IMR-90 (cell line): ENCODE measurements at regions of chr13 and their contacts with region 1.

Region 1: GRCh38 chr13:59906413-59907049 is 257.2 kb downstream of the DIAPH3 start:
- DNase-seq: peak; percentile 58
- ATAC-seq: peak; percentile 82
- H3K4me3 ChIP-seq: no peak overlapping the region
- H3K27ac ChIP-seq: no peak overlapping the region
- H3K4me1 ChIP-seq: no peaks in the 10 kb centered on the region
- H3K27me3 ChIP-seq: no peaks in the 10 kb centered on the region
- CTCF ChIP-seq: peak; percentile 80
- POLR2A ChIP-seq: no peak
- RAD21 ChIP-seq: peak; percentile 85

Region 2: DNA sequence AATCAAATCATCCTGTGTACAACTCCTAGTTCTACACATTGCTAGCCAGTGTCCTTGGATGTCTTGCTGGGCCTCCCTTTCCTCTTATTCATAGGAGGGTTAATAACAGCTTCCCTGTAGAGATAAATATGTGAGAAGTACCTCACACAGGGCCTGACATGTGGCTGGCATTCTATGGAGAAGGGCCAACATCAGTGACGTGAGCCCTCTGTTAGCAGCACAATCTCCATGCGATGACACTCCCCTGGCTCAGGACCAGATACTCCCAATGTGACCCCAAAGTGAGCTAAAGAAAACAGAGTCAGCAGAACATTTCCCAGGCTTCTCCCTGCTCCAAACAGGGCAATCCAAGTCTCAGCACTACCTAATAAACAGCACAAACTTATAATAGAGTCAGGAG is 561.2 kb before region 1 on chr13:
- CTCF ChIA-PET with region 1: no interaction called
- POLR2A ChIA-PET with region 1: no interaction called
- dilution Hi-C with region 1: no loop called
- in situ Hi-C with region 1: no loop called
- intact Hi-C with region 1: no loop called
- DNase-seq: no peak
- ATAC-seq: no peak
- H3K4me3 ChIP-seq: no peak overlapping the region
- H3K27ac ChIP-seq: no peak overlapping the region
- H3K4me1 ChIP-seq: no peaks in the 10 kb centered on the region
- H3K27me3 ChIP-seq: no peaks in the 10 kb centered on the region
- CTCF ChIP-seq: no peak
- POLR2A ChIP-seq: no peak
- RAD21 ChIP-seq: no peak

Region 3: DNA sequence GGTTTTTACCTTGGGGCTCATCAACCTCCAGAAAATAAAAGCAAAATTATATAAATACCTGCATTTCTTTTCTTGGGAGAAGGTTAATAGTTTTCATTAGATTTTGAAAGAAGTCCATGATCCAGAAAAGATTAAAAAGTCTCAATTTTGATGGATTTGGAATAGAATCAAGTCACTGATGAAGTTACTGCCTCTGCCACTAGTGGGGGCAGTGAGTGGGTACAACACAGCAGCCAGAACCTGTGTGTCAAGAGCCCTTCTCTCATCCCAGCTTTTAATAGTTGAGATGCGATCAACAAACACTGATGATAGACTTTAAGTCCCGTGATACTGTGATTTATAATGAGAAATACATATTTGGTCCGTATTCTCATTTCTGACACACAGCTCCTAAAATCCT is 429.5 kb before region 1 on chr13:
- CTCF ChIA-PET with region 1: no interaction called
- POLR2A ChIA-PET with region 1: no interaction called
- dilution Hi-C with region 1: no loop called
- in situ Hi-C with region 1: no loop called
- intact Hi-C with region 1: no loop called
- DNase-seq: no peak
- ATAC-seq: no peak
- H3K4me3 ChIP-seq: no peak overlapping the region
- H3K27ac ChIP-seq: no peak overlapping the region
- H3K4me1 ChIP-seq: no peaks in the 10 kb centered on the region
- H3K27me3 ChIP-seq: no peaks in the 10 kb centered on the region
- CTCF ChIP-seq: peak; percentile 26; the same call in 1 of the 2 replicates
- POLR2A ChIP-seq: no peak
- RAD21 ChIP-seq: no peak

Region 4: DNA sequence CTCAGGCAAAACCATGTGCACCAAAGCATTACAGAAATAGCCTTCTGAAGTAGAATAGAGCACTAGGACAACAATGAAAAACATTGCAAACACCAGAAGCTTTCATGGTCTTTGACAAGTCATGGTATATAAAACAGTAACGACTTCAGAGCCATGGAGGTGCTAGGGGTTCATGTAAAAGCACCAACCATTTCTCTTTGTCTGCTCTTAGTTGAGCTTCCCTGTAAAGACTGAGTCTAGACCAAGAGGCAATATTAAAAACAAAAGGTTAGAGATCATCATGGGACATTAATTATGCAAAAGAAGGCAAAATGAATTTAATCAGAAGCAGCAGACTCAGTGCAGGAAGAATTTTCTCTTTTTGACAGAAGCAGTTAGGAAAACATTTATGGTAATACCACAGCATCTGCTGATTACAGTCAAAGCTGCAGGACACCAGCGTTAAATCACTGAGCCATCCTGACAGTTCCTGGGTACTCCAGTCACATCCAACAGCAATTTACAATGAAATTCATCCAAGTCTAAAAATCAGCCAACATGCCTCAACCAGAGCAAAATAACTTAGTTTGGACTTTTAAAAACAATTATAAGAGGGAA is 219.6 kb before region 1 on chr13:
- CTCF ChIA-PET with region 1: interaction called, 3 read pairs
- POLR2A ChIA-PET with region 1: no interaction called
- dilution Hi-C with region 1: no loop called
- in situ Hi-C with region 1: loop called (anchors 5 kb)
- intact Hi-C with region 1: no loop called
- DNase-seq: no peak
- ATAC-seq: no peak
- H3K4me3 ChIP-seq: no peak overlapping the region
- H3K27ac ChIP-seq: no peak overlapping the region
- H3K4me1 ChIP-seq: 0 out of 2 replicates have a peak, but pooled peaks cover 2% of the 10 kb centered on the region
- H3K27me3 ChIP-seq: no peaks in the 10 kb centered on the region
- CTCF ChIP-seq: no peak
- POLR2A ChIP-seq: no peak
- RAD21 ChIP-seq: no peak

Region 5: GRCh38 chr13:60090574-60090973 is 184.0 kb after region 1 on chr13:
- CTCF ChIA-PET with region 1: no interaction called
- POLR2A ChIA-PET with region 1: no interaction called
- dilution Hi-C with region 1: no loop called
- in situ Hi-C with region 1: no loop called
- intact Hi-C with region 1: no loop called
- DNase-seq: peak; percentile 46
- ATAC-seq: peak; percentile 80
- H3K4me3 ChIP-seq: no peak overlapping the region
- H3K27ac ChIP-seq: no peak overlapping the region; the same call in 1 of the 2 replicates
- H3K4me1 ChIP-seq: peaks cover 3% of the 10 kb centered on the region
- H3K27me3 ChIP-seq: no peaks in the 10 kb centered on the region
- CTCF ChIP-seq: no peak
- POLR2A ChIP-seq: no peak
- RAD21 ChIP-seq: no peak

Region 6: GRCh38 chr13:60226507-60226906 is 320.0 kb after region 1 on chr13:
- CTCF ChIA-PET with region 1: interaction called, 3 read pairs
- POLR2A ChIA-PET with region 1: no interaction called
- dilution Hi-C with region 1: no loop called
- in situ Hi-C with region 1: no loop called
- intact Hi-C with region 1: loop called (anchors 5 kb)
- DNase-seq: peak; percentile 47
- ATAC-seq: peak; percentile 72
- H3K4me3 ChIP-seq: no peak overlapping the region
- H3K27ac ChIP-seq: no peak overlapping the region
- H3K4me1 ChIP-seq: no peaks in the 10 kb centered on the region
- H3K27me3 ChIP-seq: peaks cover 8% of the 10 kb centered on the region
- CTCF ChIP-seq: peak; percentile 57
- POLR2A ChIP-seq: no peak
- RAD21 ChIP-seq: peak; percentile 68

Region 7: DNA sequence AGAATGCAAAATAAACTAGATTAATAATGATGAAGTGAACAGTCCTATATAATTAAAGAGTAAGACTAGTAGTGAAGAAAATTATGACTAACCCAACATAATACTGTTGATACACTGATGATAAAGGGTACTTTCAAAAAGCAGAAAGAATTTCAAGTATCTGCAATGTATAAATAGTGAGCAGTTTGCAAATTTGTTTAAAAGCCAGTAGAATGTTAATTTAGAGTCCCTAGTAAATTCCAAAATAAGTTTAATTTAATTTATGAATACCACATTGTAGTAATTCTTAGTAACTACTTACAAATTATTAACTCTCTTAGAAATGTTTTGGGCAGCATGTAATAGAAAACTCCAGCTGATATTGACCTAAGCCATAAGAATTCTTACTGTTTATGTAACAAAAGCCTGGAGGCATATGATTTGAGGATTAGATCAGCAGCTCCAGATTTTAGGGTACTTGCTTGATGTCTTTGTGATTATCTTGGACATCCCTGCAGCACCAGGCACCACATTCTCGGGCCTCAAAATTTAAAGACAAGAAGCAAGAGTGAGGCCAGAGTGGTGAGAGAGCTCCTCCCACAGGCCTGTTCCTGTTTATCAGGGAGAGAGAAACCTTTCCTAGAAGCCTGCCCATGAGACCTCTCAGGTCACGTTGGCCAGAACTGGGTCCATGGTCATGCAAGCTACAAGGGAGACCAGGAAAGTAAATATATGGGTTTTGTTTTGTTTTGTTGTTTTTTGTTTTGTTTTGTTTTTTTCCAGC is 422.9 kb after region 1 on chr13:
- CTCF ChIA-PET with region 1: no interaction called
- POLR2A ChIA-PET with region 1: interaction called, 6 read pairs
- dilution Hi-C with region 1: no loop called
- in situ Hi-C with region 1: no loop called
- intact Hi-C with region 1: loop called (anchors 2 kb)
- DNase-seq: peak; percentile 16
- ATAC-seq: peak; percentile 90
- H3K4me3 ChIP-seq: no peak overlapping the region
- H3K27ac ChIP-seq: peak overlapping the region; percentile 1; the same call in 1 of the 2 replicates
- H3K4me1 ChIP-seq: peaks cover 2% of the 10 kb centered on the region; the same call in 1 of the 2 replicates
- H3K27me3 ChIP-seq: no peaks in the 10 kb centered on the region; the same call in 1 of the 2 replicates
- CTCF ChIP-seq: peak; percentile 50
- POLR2A ChIP-seq: no peak
- RAD21 ChIP-seq: peak; percentile 61

Region 8: GRCh38 chr13:60765700-60766411 is 859.3 kb after region 1 on chr13:
- CTCF ChIA-PET with region 1: no interaction called
- POLR2A ChIA-PET with region 1: no interaction called
- dilution Hi-C with region 1: no loop called
- in situ Hi-C with region 1: no loop called
- intact Hi-C with region 1: no loop called
- DNase-seq: no peak
- ATAC-seq: no peak
- H3K4me3 ChIP-seq: no peak overlapping the region
- H3K27ac ChIP-seq: no peak overlapping the region
- H3K4me1 ChIP-seq: no peaks in the 10 kb centered on the region
- H3K27me3 ChIP-seq: no peaks in the 10 kb centered on the region
- CTCF ChIP-seq: no peak
- POLR2A ChIP-seq: no peak
- RAD21 ChIP-seq: no peak